Sigmoid colon (tissue), 7 donors: ENCODE measurements at regions of chrX and their contacts with region 1.

Region 1: GRCh38 chrX:24990535-24990934 is 25.2 kb downstream of the ARX start:
- DNase-seq: no peak
- H3K4me3 ChIP-seq: no peak overlapping the region
- H3K27ac ChIP-seq: no peak overlapping the region
- H3K4me1 ChIP-seq: no peaks in the 10 kb centered on the region
- H3K27me3 ChIP-seq: no peaks in the 10 kb centered on the region
- CTCF ChIP-seq: no peak
- EP300 ChIP-seq: no peak
- POLR2A ChIP-seq: no peak

Region 2: DNA sequence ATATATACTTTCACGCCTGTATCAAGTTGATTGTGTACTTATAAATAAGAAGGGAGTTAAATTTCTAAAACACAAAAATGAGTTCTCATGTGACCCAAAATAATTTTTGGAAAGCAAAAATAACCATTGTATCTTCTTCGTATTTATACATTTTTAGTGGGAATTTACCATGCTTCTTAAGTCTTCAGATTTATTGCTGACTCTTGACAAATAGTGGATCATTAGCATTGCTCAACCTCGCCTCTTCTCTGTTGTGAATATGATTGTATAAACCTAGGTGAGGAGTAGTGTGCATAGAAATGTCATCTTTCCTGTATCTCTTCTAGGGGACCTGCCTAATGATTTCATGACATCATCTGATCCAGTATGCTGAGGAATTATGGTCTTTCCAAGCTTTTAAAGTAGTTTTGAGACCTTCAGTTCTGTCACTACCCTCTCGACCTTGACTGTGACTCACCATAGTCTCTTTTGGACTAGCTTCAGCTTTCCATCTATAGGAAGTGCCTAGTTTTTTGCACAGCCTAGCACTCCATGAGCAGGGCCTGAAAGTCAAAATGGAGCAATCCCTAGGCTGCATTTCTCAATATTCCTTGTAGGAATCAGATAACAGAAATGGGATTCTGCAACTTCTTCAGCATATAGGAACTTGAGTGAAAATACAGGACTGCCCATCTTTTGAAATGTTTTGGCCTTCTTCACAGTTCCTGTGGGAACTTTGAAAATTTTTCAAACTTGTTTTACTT is 132.4 kb before region 1 on chrX:
- intact Hi-C with region 1: loop called (anchors 10 kb)
- DNase-seq: no peak
- H3K4me3 ChIP-seq: no peak overlapping the region
- H3K27ac ChIP-seq: no peak overlapping the region
- H3K4me1 ChIP-seq: no peaks in the 10 kb centered on the region
- H3K27me3 ChIP-seq: no peaks in the 10 kb centered on the region
- CTCF ChIP-seq: no peak
- EP300 ChIP-seq: no peak
- POLR2A ChIP-seq: no peak